ENCODE measurements at regions of chr11 and their contacts with region 1.

Region 1: DNA sequence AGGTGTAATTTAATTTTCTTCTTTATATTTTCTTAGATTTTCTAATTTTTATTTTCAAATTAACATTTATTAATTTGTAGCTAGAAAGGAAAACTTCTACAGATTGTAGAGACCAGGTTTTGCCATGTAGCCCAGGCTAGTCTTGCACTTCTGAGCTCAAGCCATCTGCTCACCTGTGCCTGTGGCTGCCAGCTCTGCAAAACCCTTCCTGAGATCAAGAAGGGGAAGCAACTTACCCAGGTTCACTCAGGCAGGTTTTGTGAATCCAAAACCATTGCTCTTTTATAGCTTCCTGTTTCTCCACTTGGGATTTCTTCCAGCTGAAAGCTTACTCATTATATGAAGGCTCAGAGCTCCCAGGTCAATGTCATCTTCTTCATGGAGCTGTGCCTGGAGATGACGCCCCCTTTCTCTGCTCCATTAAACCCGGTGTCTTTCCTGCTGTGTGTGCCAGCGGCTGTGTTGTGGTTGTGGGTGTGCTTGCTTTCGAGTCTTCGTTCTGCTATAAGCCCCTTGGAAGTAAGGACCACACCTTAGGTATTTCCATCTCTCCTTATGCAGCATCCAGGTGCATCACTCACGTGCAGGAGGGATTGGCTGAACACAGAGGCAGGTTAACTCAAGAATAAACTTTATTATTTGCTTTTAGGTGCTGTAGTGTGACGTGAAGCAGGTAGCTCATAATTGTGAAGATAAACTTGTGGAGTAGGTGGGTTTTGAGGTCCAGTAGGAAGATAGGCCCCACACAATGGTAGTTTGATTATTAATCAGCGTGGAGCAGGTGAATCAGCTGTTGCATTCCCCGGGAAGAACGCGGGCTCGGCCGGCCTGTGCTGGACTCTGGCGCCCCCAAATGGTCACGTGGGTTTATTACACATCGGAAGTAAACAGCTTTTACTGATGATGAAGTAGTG is 42.2 kb upstream of the INCENP start:
- DNase-seq: no peak
- H3K4me3 ChIP-seq: no peak overlapping the region
- CTCF ChIP-seq: peak; percentile 80

Region 2: GRCh38 chr11:61792310-61793085 is 289.1 kb before region 1 on chr11 and contains the starts of genes FEN1 and TMEM258:
- CTCF ChIA-PET with region 1: interaction called, 105 read pairs
- POLR2A ChIA-PET with region 1: no interaction called
- DNase-seq: peak; percentile 75
- H3K4me3 ChIP-seq: peak within 1 kb of the TSS; percentile 98
- CTCF ChIP-seq: no peak

Region 3: GRCh38 chr11:61871158-61871597 is 210.5 kb before region 1 on chr11:
- CTCF ChIA-PET with region 1: interaction called, 113 read pairs
- POLR2A ChIA-PET with region 1: no interaction called
- DNase-seq: peak; percentile 12
- H3K4me3 ChIP-seq: peak overlapping the region; percentile 21
- CTCF ChIP-seq: peak; percentile 97

Region 4: DNA sequence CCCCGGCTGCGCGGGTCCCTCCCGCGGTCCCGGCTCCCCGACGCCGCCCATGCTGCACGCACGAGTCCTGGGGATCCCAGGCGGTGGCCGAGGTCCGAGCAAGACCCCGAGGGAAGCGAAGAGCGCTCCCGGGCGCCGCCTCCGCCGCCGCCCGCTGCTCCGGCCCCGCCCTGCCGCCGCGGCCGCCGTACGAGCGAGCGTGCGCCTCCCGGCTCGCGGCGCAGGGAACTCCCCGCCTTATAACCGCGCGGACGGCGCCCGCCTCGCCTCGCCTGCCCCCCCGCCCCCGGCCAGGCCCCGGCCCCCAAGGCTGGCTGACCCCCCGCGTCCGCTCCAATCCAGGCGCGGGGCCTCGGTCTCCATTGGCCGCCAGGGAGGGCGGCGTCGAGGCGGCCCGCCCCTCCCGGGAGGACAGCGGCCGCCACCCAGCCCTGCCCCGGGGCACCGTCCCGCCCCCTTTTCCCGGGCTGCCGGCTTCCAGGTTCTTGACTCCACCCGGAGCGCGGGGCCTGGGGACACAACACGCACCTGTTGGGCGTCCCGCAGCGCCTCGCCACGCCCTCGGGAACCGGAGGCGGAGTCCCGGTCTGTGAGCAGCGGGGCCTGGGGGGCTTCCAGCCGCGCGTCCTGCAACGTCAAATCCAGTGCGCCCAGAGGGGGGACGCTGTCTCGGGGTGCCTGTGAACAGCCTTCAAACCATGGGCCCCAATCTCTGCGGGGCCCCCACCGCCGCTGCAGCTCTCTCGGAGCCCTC is 190.1 kb before region 1 on chr11 and contains the start of gene FADS3:
- CTCF ChIA-PET with region 1: interaction called, 406 read pairs
- POLR2A ChIA-PET with region 1: no interaction called
- DNase-seq: no peak
- H3K4me3 ChIP-seq: peak within 1 kb of the TSS; percentile 90
- CTCF ChIP-seq: no peak

Region 5: DNA sequence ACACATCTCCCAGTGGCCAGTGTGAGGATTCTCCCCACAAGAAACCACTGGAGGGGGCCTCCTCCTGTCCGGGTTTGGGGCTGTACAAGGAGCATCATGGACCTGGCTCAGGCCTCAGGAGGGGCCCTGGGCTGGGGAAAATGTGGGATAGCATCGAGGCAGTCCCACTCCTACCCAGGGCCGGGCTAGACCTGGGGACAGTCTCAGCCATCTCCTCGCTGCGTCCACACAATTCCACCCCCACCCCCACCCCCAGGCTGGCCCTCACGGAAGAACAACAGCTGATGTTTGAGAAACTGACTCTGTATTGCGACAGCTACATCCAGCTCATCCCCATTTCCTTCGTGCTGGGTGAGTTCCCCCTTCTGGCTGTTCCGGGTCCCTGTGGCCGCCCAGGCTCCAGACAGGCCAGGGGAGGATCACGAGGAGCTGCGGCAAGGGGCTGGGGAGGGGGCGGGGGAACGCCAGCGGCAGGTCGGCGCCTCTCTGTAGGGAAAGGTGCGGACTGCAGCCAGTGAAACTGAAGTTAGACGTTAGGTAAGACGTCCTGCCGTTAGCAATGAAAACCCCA is 126.7 kb before region 1 on chr11:
- CTCF ChIA-PET with region 1: interaction called, 206 read pairs
- POLR2A ChIA-PET with region 1: no interaction called
- DNase-seq: no peak
- H3K4me3 ChIP-seq: peak overlapping the region; percentile 37
- CTCF ChIP-seq: peak; percentile 54

Region 6: GRCh38 chr11:61978703-61979661 is 102.7 kb before region 1 on chr11:
- CTCF ChIA-PET with region 1: interaction called, 146 read pairs
- POLR2A ChIA-PET with region 1: no interaction called
- DNase-seq: no peak
- H3K4me3 ChIP-seq: no peak overlapping the region
- CTCF ChIP-seq: no peak

Region 7: GRCh38 chr11:62069986-62070919 is 11.4 kb before region 1 on chr11:
- CTCF ChIA-PET with region 1: interaction called, 22 read pairs
- POLR2A ChIA-PET with region 1: no interaction called
- DNase-seq: no peak
- H3K4me3 ChIP-seq: no peak overlapping the region
- CTCF ChIP-seq: no peak

Region 8: GRCh38 chr11:62508268-62509058 is 426.8 kb after region 1 on chr11:
- CTCF ChIA-PET with region 1: no interaction called
- POLR2A ChIA-PET with region 1: no interaction called
- DNase-seq: peak; percentile 17
- H3K4me3 ChIP-seq: peak overlapping the region; percentile 1
- CTCF ChIP-seq: peak; percentile 68